ENCODE measurements at regions of chr6 and their contacts with region 1.

Region 1: GRCh38 chr6:5143634-5144311 is 58.6 kb downstream of the PPP1R3G start:
- DNase-seq: no peak
- H3K4me3 ChIP-seq: no peak overlapping the region
- H3K27me3 ChIP-seq: no peaks in the 10 kb centered on the region
- CTCF ChIP-seq: peak; percentile 91

Region 2: GRCh38 chr6:5053038-5053437 is 90.7 kb before region 1 on chr6:
- CTCF ChIA-PET with region 1: interaction called, 15 read pairs
- POLR2A ChIA-PET with region 1: no interaction called
- DNase-seq: no peak
- H3K4me3 ChIP-seq: no peak overlapping the region
- H3K27me3 ChIP-seq: no peaks in the 10 kb centered on the region
- CTCF ChIP-seq: no peak

Region 3: DNA sequence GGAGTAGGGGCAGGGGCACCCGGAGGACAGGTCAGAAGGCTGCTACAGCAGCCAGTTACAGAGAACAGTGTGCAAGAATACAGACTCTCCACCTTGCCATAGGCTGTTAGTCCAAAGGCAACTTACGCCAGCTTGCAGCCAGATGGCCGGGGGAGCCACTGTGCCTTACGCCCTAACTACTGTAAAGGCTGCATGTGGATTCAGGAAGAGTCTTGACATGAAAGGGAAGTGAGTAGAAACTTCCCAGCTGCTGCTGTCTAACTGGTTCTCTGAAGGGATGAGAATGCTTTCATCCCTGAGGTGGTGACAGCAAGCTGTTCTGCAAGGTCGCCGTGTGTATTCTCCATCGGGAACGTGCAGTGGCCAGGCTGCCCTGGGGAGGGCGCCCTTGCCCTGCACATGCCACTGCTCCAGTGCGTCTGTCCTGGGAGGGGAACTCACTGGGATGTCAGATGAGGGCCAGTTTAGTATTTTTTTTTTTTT is 70.8 kb after region 1 on chr6:
- CTCF ChIA-PET with region 1: interaction called, 20 read pairs
- POLR2A ChIA-PET with region 1: no interaction called
- DNase-seq: no peak
- H3K4me3 ChIP-seq: no peak overlapping the region
- H3K27me3 ChIP-seq: no peaks in the 10 kb centered on the region
- CTCF ChIP-seq: peak; percentile 79

Region 4: GRCh38 chr6:5379647-5380242 is 236.0 kb after region 1 on chr6:
- CTCF ChIA-PET with region 1: interaction called, 18 read pairs
- POLR2A ChIA-PET with region 1: no interaction called
- DNase-seq: no peak
- H3K4me3 ChIP-seq: no peak overlapping the region
- H3K27me3 ChIP-seq: no peaks in the 10 kb centered on the region
- CTCF ChIP-seq: peak; percentile 65

Region 5: GRCh38 chr6:6547110-6547879 is 1403.5 kb after region 1 on chr6:
- CTCF ChIA-PET with region 1: interaction called, 14 read pairs
- POLR2A ChIA-PET with region 1: no interaction called
- DNase-seq: peak; percentile 5
- H3K4me3 ChIP-seq: peak overlapping the region; percentile 17; the same call in 1 of the 2 replicates
- H3K27me3 ChIP-seq: no peaks in the 10 kb centered on the region
- CTCF ChIP-seq: peak; percentile 81